Vagina (tissue), 2 donors: ENCODE measurements at regions of chr2 and their contacts with region 1.

Region 1: GRCh38 chr2:27489498-27490397 is at the start of gene IFT172:
- DNase-seq: peak; percentile 98 to 99
- H3K4me3 ChIP-seq: peak within 1 kb of the TSS; percentile 55 to 57
- H3K27ac ChIP-seq: peak within 1 kb of the TSS; percentile 73
- H3K4me1 ChIP-seq: peaks cover 23% of the 10 kb centered on the region
- H3K27me3 ChIP-seq: no peaks in the 10 kb centered on the region
- CTCF ChIP-seq: no peak
- POLR2A ChIP-seq: peak in 1 of 2 donors; percentile 63
- total RNA-seq, gene IFT172: 30.7 TPM

Region 2: GRCh38 chr2:27628767-27629709 is 139.3 kb after region 1 on chr2 and contains the starts of genes CCDC121 and GPN1:
- intact Hi-C with region 1: loop called (anchors 5 kb)
- DNase-seq: peak in 1 of 2 donors; percentile 92
- H3K4me3 ChIP-seq: peak within 1 kb of the TSS; percentile 74 to 84
- H3K27ac ChIP-seq: peak within 1 kb of the TSS; percentile 89
- H3K4me1 ChIP-seq: peaks cover 26% of the 10 kb centered on the region
- H3K27me3 ChIP-seq: no peaks in the 10 kb centered on the region
- CTCF ChIP-seq: no peak
- POLR2A ChIP-seq: peak in 1 of 2 donors; percentile 39
- total RNA-seq, gene CCDC121: 2.5 TPM
- total RNA-seq, gene GPN1: 30.0 TPM